H1 (cell line): ENCODE measurements at regions of chr6 and their contacts with region 1.

Region 1: GRCh38 chr6:168451805-168452517 is 11.0 kb downstream of the SMOC2 start:
- DNase-seq: peak in 1 of 2 experiments; percentile 69
- H3K4me3 ChIP-seq: no peak overlapping the region
- H3K27ac ChIP-seq: no peak overlapping the region
- H3K4me1 ChIP-seq: peaks cover 8 to 23% (median 11%) of the 10 kb centered on the region in 4 experiments
- H3K27me3 ChIP-seq: no peaks in the 10 kb centered on the region
- CTCF ChIP-seq: peak; percentile 56 to 68 (median 64)
- EP300 ChIP-seq: no peak
- POLR2A ChIP-seq: no peak
- RAD21 ChIP-seq: peak; percentile 64 to 74

Region 2: DNA sequence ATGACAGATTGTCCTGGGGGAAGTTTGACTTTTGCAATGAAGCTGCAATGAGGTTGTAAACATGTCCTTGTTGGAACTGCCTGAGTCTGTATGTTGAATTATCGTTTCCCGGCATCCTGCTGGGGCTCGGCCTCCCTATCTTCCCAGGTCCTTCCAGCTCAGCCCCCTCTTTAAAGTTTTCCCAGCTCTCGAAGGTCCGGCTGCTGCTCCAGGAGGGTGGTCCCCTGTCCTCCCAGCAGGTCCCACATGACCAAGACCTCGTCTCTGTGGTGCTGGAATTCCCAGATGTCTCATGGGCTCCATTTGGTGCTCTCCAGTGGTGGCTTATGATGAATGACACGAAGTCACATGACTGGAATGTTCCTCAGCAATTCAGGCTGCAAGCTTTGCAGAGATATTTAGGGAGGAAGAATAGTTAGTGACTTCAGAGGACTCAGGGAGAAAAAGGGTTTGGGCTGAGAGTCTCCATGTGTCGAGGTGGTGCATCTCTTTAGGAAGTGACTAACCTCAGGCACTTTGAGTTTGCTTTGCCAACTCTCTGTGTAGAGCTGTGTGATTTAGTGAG is 10.4 kb after region 1 on chr6:
- CTCF ChIA-PET with region 1: interaction called, 14 read pairs
- POLR2A ChIA-PET with region 1: no interaction called
- DNase-seq: no peak
- H3K4me3 ChIP-seq: no peak overlapping the region
- H3K27ac ChIP-seq: no peak overlapping the region
- H3K4me1 ChIP-seq: no peaks in the 10 kb centered on the region; a peak in 2 of 7 replicates
- H3K27me3 ChIP-seq: no peaks in the 10 kb centered on the region
- CTCF ChIP-seq: no peak
- EP300 ChIP-seq: no peak
- POLR2A ChIP-seq: no peak
- RAD21 ChIP-seq: no peak

Region 3: DNA sequence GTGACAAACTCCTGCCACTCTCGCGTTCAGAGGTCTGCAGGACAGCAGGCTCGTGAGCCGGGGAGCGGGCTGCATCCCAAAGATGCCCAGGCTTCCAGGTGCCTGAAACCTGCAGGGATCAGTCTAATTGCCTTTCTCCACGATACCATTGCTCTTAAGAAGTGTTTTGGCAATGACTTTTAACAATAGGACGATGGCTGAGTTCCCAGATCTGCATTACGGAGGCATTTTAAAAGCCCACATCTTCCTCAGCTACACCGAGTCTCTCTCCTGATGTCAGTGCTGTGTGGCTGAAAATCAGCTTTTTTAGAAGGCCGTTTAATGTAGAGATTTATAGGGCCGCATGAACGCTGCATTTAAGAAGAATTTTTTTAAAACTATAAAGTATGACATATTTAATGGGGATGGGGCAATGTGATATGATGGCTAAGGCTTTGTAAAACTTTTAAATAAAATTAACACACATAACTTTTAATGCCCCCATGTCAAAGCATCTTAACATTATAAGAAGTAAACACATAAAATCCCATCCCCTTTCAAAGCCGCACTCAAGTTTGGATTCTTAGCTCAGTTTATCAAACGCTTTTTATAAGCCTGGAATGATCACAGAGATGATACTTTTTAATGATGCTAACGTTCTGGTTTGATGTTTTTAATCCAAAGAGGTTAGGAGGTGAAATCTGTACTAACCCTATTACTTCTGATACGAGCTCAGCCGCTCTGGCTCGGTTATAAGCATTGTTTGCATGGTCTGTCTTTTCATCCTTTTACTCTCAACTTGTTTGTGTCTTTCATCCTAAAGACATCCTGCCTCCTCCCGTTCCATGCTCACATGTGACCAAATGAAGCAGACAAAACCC is 375.0 kb after region 1 on chr6:
- CTCF ChIA-PET with region 1: no interaction called
- POLR2A ChIA-PET with region 1: no interaction called
- DNase-seq: no peak
- H3K4me3 ChIP-seq: no peak overlapping the region
- H3K27ac ChIP-seq: no peak overlapping the region
- H3K4me1 ChIP-seq: peaks cover 0 to 3% (median 0%) of the 10 kb centered on the region in 4 experiments; a peak in 4 of 7 replicates
- H3K27me3 ChIP-seq: no peaks in the 10 kb centered on the region
- CTCF ChIP-seq: no peak
- EP300 ChIP-seq: no peak
- POLR2A ChIP-seq: no peak
- RAD21 ChIP-seq: no peak